Natural killer cell (primary cell): ENCODE measurements at regions of chrX and their contacts with region 1.

Region 1: GRCh38 chrX:45758319-45758718 is 557.6 kb upstream of the DIPK2B start:
- DNase-seq: peak; percentile 28 to 63
- ATAC-seq: peak; percentile 37 to 51 (median 42)
- H3K4me3 ChIP-seq: peak overlapping the region; percentile 8
- H3K4me3 Mint-ChIP-seq: peak overlapping the region; percentile 93
- H3K27ac ChIP-seq: peak overlapping the region; percentile 97
- H3K27ac Mint-ChIP-seq: peak overlapping the region in 1 of 2 donors; percentile 99
- H3K4me1 ChIP-seq: peaks cover 46% of the 10 kb centered on the region
- H3K4me1 Mint-ChIP-seq: peaks cover 45 to 58% of the 10 kb centered on the region in 2 donors
- H3K27me3 ChIP-seq: no peaks in the 10 kb centered on the region
- H3K27me3 Mint-ChIP-seq: no peaks in the 10 kb centered on the region
- CTCF ChIP-seq: no peak

Region 2: GRCh38 chrX:45769761-45770582 is 11.7 kb after region 1 on chrX:
- intact Hi-C with region 1: loop called (anchors 1 kb)
- DNase-seq: peak; percentile 36 to 67
- ATAC-seq: peak; percentile 61 to 79 (median 67)
- H3K4me3 ChIP-seq: peak overlapping the region; percentile 73
- H3K4me3 Mint-ChIP-seq: peak overlapping the region; percentile 91
- H3K27ac ChIP-seq: peak overlapping the region; percentile 94
- H3K27ac Mint-ChIP-seq: peak overlapping the region; percentile 88 to 90
- H3K4me1 ChIP-seq: peaks cover 15% of the 10 kb centered on the region
- H3K4me1 Mint-ChIP-seq: peaks cover 42 to 47% of the 10 kb centered on the region in 2 donors
- H3K27me3 ChIP-seq: no peaks in the 10 kb centered on the region
- H3K27me3 Mint-ChIP-seq: no peaks in the 10 kb centered on the region
- CTCF ChIP-seq: no peak